Motor neuron (in vitro differentiated cells): ENCODE measurements at regions of chr5 and their contacts with region 1.

Region 1: GRCh38 chr5:111158105-111158744 is 66.0 kb upstream of the CAMK4 start:
- ATAC-seq: peak; percentile 53 to 76 (median 68)
- H3K4me3 ChIP-seq: no peak overlapping the region
- H3K27ac ChIP-seq: no peak overlapping the region
- H3K4me1 ChIP-seq: no peaks in the 10 kb centered on the region

Region 2: DNA sequence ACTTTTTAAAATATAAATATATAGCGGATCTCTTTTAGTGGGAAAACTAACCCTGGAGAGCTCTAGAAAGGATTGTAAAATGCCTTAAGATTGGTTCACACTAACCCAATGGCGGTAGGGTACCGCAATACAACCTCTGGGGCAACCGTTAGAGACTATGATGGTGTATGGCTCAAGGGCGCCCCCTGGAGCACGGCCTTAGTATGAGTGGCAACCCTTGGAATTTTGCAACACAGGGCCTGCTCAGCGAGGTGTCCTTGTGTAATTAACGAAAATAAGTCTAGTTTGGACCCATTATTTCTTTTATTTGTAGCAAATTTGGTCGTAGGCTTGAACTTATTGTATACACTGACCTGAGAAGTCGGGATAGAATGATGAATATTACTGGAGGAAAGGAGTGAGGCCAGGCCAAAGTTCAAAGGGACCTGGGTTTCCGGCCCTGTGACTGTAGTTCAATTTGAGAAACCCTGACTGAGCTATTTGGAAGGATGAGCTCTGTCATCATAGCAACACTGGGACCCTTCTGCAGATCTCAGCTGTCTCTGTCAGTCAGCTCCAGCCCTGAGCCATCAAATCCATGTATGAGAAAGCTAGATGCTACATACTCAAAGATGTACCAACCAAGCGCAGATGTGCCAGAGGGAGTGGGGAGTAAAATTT is 120.8 kb after region 1 on chr5:
- in situ Hi-C with region 1: loop called in 2 of 9 experiments (anchors 10 to 25 kb)
- ATAC-seq: peak in 5 of 8 experiments; percentile 36 to 89 (median 52)
- H3K4me3 ChIP-seq: no peak overlapping the region
- H3K27ac ChIP-seq: no peak overlapping the region
- H3K4me1 ChIP-seq: peaks cover 0 to 4% of the 10 kb centered on the region in 2 donors

Region 3: DNA sequence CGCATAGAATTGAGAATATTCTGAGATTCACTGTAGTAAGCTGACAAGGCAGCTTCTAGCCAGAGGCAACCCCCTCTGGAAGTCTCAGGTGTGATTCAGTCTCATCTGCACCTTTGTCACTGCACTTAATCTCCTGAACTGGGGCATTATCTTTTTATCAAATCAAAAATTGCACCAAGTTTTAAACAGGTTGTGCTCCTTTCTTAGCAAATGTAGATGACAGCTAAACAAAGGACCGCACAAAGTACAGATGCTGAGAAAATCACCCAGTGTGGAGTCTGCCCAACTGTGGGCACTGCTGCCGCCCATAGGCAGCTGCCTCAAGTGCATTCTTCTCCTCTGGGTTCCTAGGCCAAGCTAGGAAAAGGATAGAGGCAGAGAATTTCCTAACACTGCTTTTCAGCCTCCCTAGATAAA is 303.0 kb after region 1 on chr5:
- in situ Hi-C with region 1: loop called in 1 of 9 experiments (anchors 25 kb)
- ATAC-seq: peak; percentile 75 to 97 (median 86)
- H3K4me3 ChIP-seq: no peak overlapping the region
- H3K27ac ChIP-seq: no peak overlapping the region
- H3K4me1 ChIP-seq: no peaks in the 10 kb centered on the region

Region 4: DNA sequence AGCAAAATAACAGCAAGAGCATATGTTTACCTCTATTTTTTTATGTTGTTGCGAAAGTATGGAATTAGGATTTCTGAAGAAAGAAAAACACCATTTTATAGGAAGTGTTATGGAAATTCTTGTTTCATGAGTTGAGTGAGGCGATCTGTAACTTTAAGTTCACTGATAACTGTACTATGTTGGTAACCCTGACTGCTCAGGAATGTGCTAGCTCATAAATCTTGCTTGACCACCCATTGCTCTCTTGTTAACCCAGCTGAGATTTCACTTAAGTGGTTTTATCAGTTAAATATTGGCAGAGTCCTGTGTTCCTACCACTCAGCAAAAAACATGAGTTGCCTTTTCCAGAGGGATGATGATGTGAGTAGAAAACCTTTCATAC is 445.2 kb after region 1 on chr5:
- in situ Hi-C with region 1: no loop called
- ATAC-seq: no peak
- H3K4me3 ChIP-seq: no peak overlapping the region
- H3K27ac ChIP-seq: no peak overlapping the region
- H3K4me1 ChIP-seq: no peaks in the 10 kb centered on the region

Region 5: GRCh38 chr5:112160652-112161391 is 1002.6 kb after region 1 on chr5:
- in situ Hi-C with region 1: loop called in 3 of 9 experiments (anchors 25 kb)
- ATAC-seq: peak; percentile 85 to 95 (median 94)
- H3K4me3 ChIP-seq: peak overlapping the region; percentile 76 to 96 (median 94)
- H3K27ac ChIP-seq: peak overlapping the region; percentile 84 to 85
- H3K4me1 ChIP-seq: peaks cover 0 to 10% of the 10 kb centered on the region in 2 donors